Activated T-helper 1 cell treated with anti-CD3 and anti-CD28 coated beads, Interleukin-12 subunit alpha, Interleukin-12 subunit beta, Interleukin-2, Interleukin-4 antibody, amounts not matched to agents 30 ng/mL and 10 ng/mL and 1 ng/mL, durations not matched to agents 14 hours and 24 hours and 36 hours (primary cell): ENCODE measurements at regions of chr16 and their contacts with region 1.

Region 1: DNA sequence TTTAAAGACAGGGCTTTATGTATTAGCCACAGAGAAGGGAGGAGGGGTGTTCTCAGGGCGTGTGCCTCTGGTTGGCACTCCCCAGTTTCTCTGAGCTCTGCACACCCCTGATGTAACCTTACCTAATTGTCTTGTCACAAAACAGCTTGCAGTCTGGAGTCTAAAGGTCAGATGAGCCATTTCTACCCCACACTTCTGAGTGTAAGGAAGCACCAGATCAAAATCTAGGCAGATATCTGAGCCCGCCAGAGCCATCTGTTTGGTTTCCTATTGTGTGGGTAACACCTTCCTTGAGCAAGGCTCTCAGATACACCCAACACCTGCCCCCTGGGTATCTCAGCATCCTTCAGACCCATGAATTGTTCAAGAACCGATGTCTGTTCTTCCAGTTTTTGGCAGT is 15.5 kb downstream of the CDH1 start:
- DNase-seq: peak; percentile 20
- H3K4me3 Mint-ChIP-seq: peak overlapping the region; percentile 52
- H3K27ac Mint-ChIP-seq: peak overlapping the region; percentile 86
- H3K4me1 Mint-ChIP-seq: peaks cover 42% of the 10 kb centered on the region
- H3K27me3 Mint-ChIP-seq: peaks cover 2% of the 10 kb centered on the region

Region 2: DNA sequence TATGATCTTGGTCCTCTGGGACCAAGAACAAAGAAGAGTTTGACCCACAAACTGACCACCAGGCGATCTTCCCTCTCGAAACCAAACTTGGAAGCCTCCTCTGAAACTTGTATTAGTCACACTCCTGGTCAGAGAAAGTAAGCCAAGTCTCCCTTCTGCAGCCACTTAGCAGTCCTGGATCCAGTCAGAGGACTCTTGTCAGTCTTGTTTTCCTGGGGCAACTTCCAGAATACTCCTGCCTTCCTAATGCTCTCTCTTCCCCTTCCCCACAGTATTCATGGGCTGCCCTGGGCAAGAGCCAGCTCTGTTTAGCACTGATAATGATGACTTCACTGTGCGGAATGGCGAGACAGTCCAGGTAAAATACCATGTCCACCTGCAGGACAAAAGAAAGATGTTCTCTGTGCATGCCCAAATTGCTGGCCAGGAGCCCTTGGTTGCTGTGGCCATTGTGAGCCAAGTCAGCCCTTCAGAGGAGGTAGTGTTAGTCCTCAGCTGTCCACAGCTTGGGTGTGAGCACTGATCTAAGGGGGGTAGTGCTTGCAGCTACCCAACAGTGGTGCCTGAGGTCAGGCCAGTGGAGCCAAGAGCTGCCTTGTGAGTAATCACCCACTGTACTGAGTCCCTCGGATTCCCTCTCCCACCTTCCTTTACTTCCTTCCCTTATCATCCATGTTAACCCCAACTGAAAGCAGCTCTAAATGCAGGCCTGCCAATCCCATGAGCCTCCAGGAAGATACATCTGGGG is 76.3 kb before region 1 on chr16:
- intact Hi-C with region 1: no loop called
- DNase-seq: no peak
- H3K4me3 Mint-ChIP-seq: no peak overlapping the region
- H3K27ac Mint-ChIP-seq: no peak overlapping the region
- H3K4me1 Mint-ChIP-seq: no peaks in the 10 kb centered on the region
- H3K27me3 Mint-ChIP-seq: no peaks in the 10 kb centered on the region

Region 3: DNA sequence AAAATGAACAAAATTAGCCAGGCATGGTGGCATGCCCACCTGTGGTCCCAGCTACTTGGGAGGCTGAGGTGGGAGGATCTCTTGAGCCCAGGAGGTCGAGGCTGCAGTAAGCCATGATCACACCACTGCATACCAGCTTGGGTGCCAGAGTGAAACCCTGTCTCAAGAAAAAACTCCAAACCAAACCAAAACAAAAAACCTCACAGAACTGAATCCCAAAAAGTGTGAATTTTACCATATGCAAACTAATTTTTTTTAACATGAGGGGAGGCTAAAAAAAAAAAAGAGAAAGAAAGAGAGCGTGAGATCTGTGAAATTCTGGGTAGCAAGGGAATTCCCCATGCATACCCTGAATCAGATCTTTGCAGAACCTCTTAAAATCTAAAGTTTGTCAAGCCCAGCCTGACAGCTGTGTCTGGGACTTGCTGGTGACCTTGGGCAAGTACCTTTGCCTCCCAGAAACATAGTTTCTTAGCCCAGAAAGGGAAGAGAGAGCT is 32.6 kb before region 1 on chr16:
- intact Hi-C with region 1: loop called (anchors 1 kb)
- DNase-seq: peak; percentile 7
- H3K4me3 Mint-ChIP-seq: no peak overlapping the region
- H3K27ac Mint-ChIP-seq: peak overlapping the region; percentile 45
- H3K4me1 Mint-ChIP-seq: peaks cover 18% of the 10 kb centered on the region
- H3K27me3 Mint-ChIP-seq: no peaks in the 10 kb centered on the region

Region 4: GRCh38 chr16:68800257-68800875 is 47.8 kb after region 1 on chr16:
- intact Hi-C with region 1: loop called (anchors 5 kb)
- DNase-seq: peak; percentile 48
- H3K4me3 Mint-ChIP-seq: no peak overlapping the region
- H3K27ac Mint-ChIP-seq: no peak overlapping the region
- H3K4me1 Mint-ChIP-seq: peaks cover 4% of the 10 kb centered on the region
- H3K27me3 Mint-ChIP-seq: peaks cover 2% of the 10 kb centered on the region